Colonic mucosa (tissue), 4 donors: ENCODE measurements at regions of chr3 and their contacts with region 1.

Region 1: DNA sequence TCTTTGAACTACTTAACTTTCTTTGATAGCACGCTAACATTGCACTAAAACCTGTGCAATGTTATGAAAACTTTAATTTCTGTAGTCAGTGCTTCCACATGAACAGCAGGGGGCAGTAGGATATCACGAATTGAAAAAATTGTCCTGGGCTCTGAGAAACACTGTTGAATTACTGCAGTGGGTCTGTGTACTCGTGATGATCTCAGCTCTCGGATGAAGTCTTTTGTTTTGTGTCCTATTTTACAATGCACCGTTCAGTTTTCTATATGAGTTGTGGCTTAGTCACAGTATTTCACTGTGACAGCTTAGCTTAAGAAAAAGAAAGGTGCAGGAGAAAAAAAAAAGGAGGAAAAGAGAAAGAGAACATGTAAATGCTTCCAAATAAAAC is 141.3 kb upstream of the CCDC54 start:
- DNase-seq: peak; percentile 62
- H3K4me3 ChIP-seq: peak overlapping the region; percentile 44
- H3K27ac ChIP-seq: no peak overlapping the region
- H3K4me1 ChIP-seq: no peaks in the 10 kb centered on the region
- H3K27me3 ChIP-seq: no peaks in the 10 kb centered on the region
- CTCF ChIP-seq: peak; percentile 82

Region 2: GRCh38 chr3:107082527-107082926 is 153.4 kb before region 1 on chr3:
- intact Hi-C with region 1: no loop called
- DNase-seq: no peak
- H3K4me3 ChIP-seq: no peak overlapping the region
- H3K27ac ChIP-seq: no peak overlapping the region
- H3K4me1 ChIP-seq: no peaks in the 10 kb centered on the region
- H3K27me3 ChIP-seq: no peaks in the 10 kb centered on the region
- CTCF ChIP-seq: no peak

Region 3: GRCh38 chr3:107421170-107421792 is 185.4 kb after region 1 on chr3:
- intact Hi-C with region 1: loop called (anchors 5 kb)
- DNase-seq: no peak
- H3K4me3 ChIP-seq: no peak overlapping the region
- H3K27ac ChIP-seq: no peak overlapping the region
- H3K4me1 ChIP-seq: no peaks in the 10 kb centered on the region
- H3K27me3 ChIP-seq: no peaks in the 10 kb centered on the region
- CTCF ChIP-seq: peak; percentile 48

Region 4: DNA sequence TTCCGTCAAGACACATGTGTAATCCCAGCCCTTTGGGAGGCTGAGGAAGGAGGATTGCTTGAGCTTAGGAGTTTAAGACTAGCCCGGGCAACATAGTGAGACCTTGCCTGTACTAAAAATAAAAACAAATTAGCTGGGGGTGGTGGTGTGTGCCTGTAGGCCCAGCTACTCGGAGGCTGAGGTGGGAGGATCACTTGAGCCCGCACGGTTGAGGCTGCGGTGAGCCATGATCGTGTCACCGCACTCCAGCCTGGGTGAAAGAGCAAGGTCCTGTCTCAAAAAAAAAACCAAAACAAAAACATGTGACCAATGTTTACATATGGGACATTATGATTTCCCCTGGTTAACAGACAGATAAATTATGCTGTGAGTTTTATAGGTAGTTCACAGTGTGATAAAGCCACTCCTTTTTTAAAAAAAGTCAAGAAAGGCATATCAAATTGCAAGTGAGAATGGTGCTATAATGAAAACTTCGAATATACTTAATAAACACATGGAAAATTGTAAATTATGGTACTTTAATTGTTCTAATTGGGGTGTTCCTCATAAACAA is 296.1 kb after region 1 on chr3:
- intact Hi-C with region 1: loop called (anchors 10 kb)
- DNase-seq: no peak
- H3K4me3 ChIP-seq: no peak overlapping the region
- H3K27ac ChIP-seq: no peak overlapping the region
- H3K4me1 ChIP-seq: no peaks in the 10 kb centered on the region
- H3K27me3 ChIP-seq: no peaks in the 10 kb centered on the region
- CTCF ChIP-seq: no peak

Region 5: GRCh38 chr3:107753480-107753879 is 517.6 kb after region 1 on chr3:
- intact Hi-C with region 1: loop called (anchors 5 kb)
- DNase-seq: peak; percentile 33
- H3K4me3 ChIP-seq: no peak overlapping the region
- H3K27ac ChIP-seq: no peak overlapping the region
- H3K4me1 ChIP-seq: no peaks in the 10 kb centered on the region
- H3K27me3 ChIP-seq: no peaks in the 10 kb centered on the region
- CTCF ChIP-seq: peak; percentile 43

Region 6: GRCh38 chr3:107846279-107846852 is 610.4 kb after region 1 on chr3:
- intact Hi-C with region 1: loop called (anchors 10 kb)
- DNase-seq: peak; percentile 64
- H3K4me3 ChIP-seq: no peak overlapping the region
- H3K27ac ChIP-seq: no peak overlapping the region
- H3K4me1 ChIP-seq: no peaks in the 10 kb centered on the region
- H3K27me3 ChIP-seq: no peaks in the 10 kb centered on the region
- CTCF ChIP-seq: peak; percentile 46